ENCODE measurements at regions of chr14 and their contacts with region 1.

Region 1: GRCh38 chr14:52068615-52069303 is at the start of gene NID2:
- DNase-seq: peak; percentile 93
- H3K4me3 ChIP-seq: peak within 1 kb of the TSS; percentile 99
- H3K27ac ChIP-seq: peak within 1 kb of the TSS; percentile 98
- H3K27me3 ChIP-seq: no peaks in the 10 kb centered on the region
- CTCF ChIP-seq: 0 out of 2 replicates have a peak, but pooled peaks have one; percentile 2
- polyA plus RNA-seq, gene NID2: 413 and 418 TPM in 2 replicates

Region 2: GRCh38 chr14:52025310-52025709 is 43.4 kb before region 1 on chr14:
- CTCF ChIA-PET with region 1: no interaction called
- POLR2A ChIA-PET with region 1: interaction called, 18 read pairs
- DNase-seq: peak; percentile 78
- H3K4me3 ChIP-seq: no peak overlapping the region
- H3K27ac ChIP-seq: peak overlapping the region; percentile 58
- H3K27me3 ChIP-seq: no peaks in the 10 kb centered on the region
- CTCF ChIP-seq: no peak

Region 3: DNA sequence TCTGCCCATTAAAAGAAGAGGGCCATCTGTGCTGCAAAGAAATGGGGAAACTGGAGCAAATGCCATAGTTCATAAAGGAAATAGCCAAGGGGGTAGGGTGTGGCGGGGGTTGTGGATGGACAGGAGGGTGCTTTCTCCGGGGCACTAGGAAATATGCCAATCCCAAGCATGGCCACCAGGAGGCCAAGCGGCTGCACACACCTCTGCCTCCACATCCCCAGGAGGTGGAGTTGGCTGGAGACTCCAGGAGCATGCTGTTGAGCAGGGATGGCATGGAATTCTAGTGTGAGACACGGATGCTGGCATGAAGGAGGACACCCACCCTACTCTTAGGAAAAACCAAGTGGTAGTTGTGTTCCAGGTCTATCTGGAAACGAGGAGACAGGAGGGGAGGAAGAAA is 25.1 kb before region 1 on chr14:
- CTCF ChIA-PET with region 1: interaction called, 3 read pairs
- POLR2A ChIA-PET with region 1: interaction called, 36 read pairs
- DNase-seq: no peak
- H3K4me3 ChIP-seq: no peak overlapping the region
- H3K27ac ChIP-seq: no peak overlapping the region
- H3K27me3 ChIP-seq: no peaks in the 10 kb centered on the region
- CTCF ChIP-seq: peak; percentile 61

Region 4: GRCh38 chr14:52080817-52081755 is 12.3 kb after region 1 on chr14:
- CTCF ChIA-PET with region 1: interaction called, 8 read pairs
- POLR2A ChIA-PET with region 1: interaction called, 61 read pairs
- DNase-seq: peak; percentile 72
- H3K4me3 ChIP-seq: no peak overlapping the region
- H3K27ac ChIP-seq: peak overlapping the region; percentile 89
- H3K27me3 ChIP-seq: no peaks in the 10 kb centered on the region
- CTCF ChIP-seq: no peak

Region 5: DNA sequence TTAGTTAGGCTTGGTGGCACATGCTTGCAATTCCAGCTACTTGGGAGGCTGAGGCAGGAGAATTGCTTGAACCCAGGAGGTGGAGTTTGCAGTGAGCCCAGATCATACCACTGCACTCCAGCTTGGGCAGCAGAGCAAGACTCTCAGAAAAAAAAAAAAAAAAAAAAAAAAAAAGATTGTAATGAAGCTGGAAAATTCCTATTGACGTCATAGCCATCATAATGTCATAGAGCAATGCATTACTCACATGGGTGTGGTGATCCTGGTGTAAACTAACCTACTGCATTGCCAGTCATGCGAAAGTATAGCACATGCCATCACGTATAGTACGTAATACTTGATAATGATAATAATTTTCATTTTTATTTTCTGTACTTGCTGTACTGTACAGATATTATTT is 42.8 kb after region 1 on chr14:
- CTCF ChIA-PET with region 1: no interaction called
- POLR2A ChIA-PET with region 1: interaction called, 45 read pairs
- DNase-seq: no peak
- H3K4me3 ChIP-seq: no peak overlapping the region
- H3K27ac ChIP-seq: peak overlapping the region; percentile 86
- H3K27me3 ChIP-seq: no peaks in the 10 kb centered on the region
- CTCF ChIP-seq: no peak

Region 6: GRCh38 chr14:52124791-52125661 is 56.3 kb after region 1 on chr14:
- CTCF ChIA-PET with region 1: interaction called, 3 read pairs
- POLR2A ChIA-PET with region 1: interaction called, 10 read pairs
- DNase-seq: no peak
- H3K4me3 ChIP-seq: no peak overlapping the region
- H3K27ac ChIP-seq: peak overlapping the region; percentile 80
- H3K27me3 ChIP-seq: no peaks in the 10 kb centered on the region
- CTCF ChIP-seq: no peak

Region 7: GRCh38 chr14:52131640-52132320 is 63.0 kb after region 1 on chr14:
- CTCF ChIA-PET with region 1: interaction called, 23 read pairs
- POLR2A ChIA-PET with region 1: interaction called, 4 read pairs
- DNase-seq: peak; percentile 93
- H3K4me3 ChIP-seq: no peak overlapping the region
- H3K27ac ChIP-seq: no peak overlapping the region
- H3K27me3 ChIP-seq: no peaks in the 10 kb centered on the region
- CTCF ChIP-seq: peak; percentile 77